ENCODE measurements at regions of chr11 and their contacts with region 1.

Region 1: GRCh38 chr11:80687941-80688340 is 1247.1 kb upstream of the TENM4 start:
- DNase-seq: no peak
- ATAC-seq: no peak
- H3K4me3 ChIP-seq: no peak overlapping the region
- H3K4me3 Mint-ChIP-seq: no peak overlapping the region
- H3K27ac ChIP-seq: no peak overlapping the region
- H3K27ac Mint-ChIP-seq: no peak overlapping the region
- H3K4me1 ChIP-seq: no peaks in the 10 kb centered on the region
- H3K4me1 Mint-ChIP-seq: no peaks in the 10 kb centered on the region
- H3K27me3 ChIP-seq: no peaks in the 10 kb centered on the region
- H3K27me3 Mint-ChIP-seq: no peaks in the 10 kb centered on the region
- CTCF ChIP-seq: no peak

Region 2: DNA sequence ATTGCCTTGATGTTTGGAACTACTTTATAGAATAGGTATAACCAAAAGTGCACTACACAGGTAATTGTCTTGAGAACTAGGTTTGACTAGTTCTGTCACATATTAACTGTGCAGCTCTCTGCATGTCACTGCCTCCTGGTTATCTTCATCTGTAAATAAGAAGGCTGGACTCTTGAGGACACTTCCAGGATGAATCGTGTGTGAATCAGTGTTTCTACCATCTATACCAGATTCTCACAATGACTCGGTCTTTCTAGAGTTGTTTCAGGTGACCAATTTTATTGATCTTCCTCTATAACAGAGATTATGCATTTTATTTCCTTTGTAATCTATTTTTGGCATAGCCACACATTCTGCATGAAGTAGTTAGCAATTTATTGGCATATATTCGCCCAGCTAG is 66.1 kb before region 1 on chr11:
- CTCF ChIA-PET with region 1: no interaction called
- POLR2A ChIA-PET with region 1: no interaction called
- intact Hi-C with region 1: loop called in 1 of 2 experiments (anchors 10 kb)
- DNase-seq: no peak
- ATAC-seq: no peak
- H3K4me3 ChIP-seq: no peak overlapping the region
- H3K4me3 Mint-ChIP-seq: no peak overlapping the region
- H3K27ac ChIP-seq: no peak overlapping the region
- H3K27ac Mint-ChIP-seq: no peak overlapping the region
- H3K4me1 ChIP-seq: no peaks in the 10 kb centered on the region
- H3K4me1 Mint-ChIP-seq: no peaks in the 10 kb centered on the region
- H3K27me3 ChIP-seq: no peaks in the 10 kb centered on the region
- H3K27me3 Mint-ChIP-seq: no peaks in the 10 kb centered on the region
- CTCF ChIP-seq: no peak

Region 3: DNA sequence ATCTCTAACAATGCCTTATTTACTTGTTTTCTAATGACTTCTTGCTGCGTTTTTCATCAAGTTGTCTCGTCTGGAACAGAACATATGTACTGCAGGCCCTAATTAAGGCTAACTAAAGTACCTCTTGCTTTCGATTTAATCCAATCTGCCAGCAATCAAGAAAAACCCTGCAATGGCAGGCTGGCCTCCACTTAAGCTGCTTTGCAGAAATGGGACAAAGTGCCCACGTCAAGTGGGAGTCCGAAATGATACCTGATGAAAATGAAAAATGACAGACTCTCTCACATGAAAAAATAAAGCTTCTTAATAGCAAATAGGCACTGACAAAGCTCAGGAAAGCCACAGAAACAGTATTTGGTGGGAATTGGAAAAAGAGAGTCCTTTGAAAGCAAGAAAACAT is 591.0 kb after region 1 on chr11:
- CTCF ChIA-PET with region 1: no interaction called
- POLR2A ChIA-PET with region 1: no interaction called
- intact Hi-C with region 1: no loop called
- DNase-seq: no peak
- ATAC-seq: no peak
- H3K4me3 ChIP-seq: no peak overlapping the region
- H3K4me3 Mint-ChIP-seq: no peak overlapping the region
- H3K27ac ChIP-seq: no peak overlapping the region
- H3K27ac Mint-ChIP-seq: no peak overlapping the region
- H3K4me1 ChIP-seq: no peaks in the 10 kb centered on the region
- H3K4me1 Mint-ChIP-seq: no peaks in the 10 kb centered on the region
- H3K27me3 ChIP-seq: no peaks in the 10 kb centered on the region
- H3K27me3 Mint-ChIP-seq: no peaks in the 10 kb centered on the region
- CTCF ChIP-seq: no peak